ENCODE measurements at regions of chr4 and their contacts with region 1.

Region 1: DNA sequence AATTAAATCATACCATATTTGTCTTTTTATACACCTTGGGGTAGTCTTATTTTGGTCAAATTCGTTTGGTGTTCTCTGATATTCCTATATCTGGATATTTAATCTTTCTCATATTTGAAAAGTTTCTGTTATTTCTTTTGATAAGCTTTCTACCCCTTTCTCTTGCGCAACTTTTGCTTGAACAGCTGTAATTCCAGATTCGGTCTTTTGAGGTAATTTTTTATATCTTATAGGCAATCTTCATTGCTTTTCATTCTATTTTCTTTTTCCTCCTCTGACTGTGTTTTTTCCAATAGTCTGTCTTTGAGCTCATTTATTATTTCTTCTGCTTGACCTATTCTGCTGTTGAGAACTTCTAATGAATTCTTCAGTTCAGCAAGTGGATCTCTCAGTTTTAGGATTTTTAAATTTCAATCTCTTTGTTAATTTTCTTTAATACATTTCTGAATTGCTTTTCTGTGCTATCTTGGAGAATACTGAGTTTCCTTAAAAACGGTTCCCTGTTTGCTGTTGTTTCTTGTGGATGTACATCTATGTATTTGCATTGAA is 11.3 kb upstream of the MTHFD2L start:
- H3K4me3 ChIP-seq: no peak overlapping the region
- H3K27ac ChIP-seq: no peak overlapping the region
- H3K4me1 ChIP-seq: no peaks in the 10 kb centered on the region
- CTCF ChIP-seq: no peak

Region 2: DNA sequence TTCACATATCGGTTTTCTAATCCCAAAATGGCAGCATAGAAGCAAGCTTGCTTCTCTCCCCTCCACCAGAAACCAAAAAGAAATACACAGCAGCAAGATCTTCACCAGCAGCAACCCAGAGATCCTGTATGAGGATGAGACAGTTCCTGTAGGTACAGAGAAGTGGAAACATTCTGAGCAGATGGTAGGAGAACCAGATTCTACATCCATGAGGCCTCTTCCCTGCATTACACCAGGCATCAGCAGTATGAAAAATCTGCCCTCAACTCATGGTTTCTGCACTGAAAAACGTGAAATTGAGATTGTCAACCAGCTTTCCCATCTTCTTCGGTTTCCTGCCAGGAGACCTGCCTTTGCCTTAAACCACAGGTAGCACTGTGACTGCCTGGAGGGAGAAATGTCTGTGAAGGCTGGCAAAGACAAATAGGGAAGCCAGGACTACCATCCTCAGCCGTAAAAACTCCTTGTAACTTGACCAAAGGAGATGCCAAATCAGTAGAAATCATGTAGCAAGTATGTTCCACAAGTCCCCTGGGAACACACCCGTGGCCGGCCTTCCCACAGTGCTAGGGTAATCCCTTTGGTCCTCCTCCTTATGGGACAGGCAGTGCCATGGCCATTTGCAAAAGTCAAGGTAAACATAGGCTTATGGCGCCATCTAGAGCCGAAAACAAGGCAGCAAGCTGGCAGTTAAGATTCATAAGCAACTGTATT is 12.7 kb before region 1 on chr4:
- CTCF ChIA-PET with region 1: interaction called, 13 read pairs
- POLR2A ChIA-PET with region 1: no interaction called
- H3K4me3 ChIP-seq: no peak overlapping the region
- H3K27ac ChIP-seq: no peak overlapping the region
- H3K4me1 ChIP-seq: no peaks in the 10 kb centered on the region
- CTCF ChIP-seq: peak; percentile 29; the same call in 1 of the 2 replicates